Adrenal gland (tissue), 19 donors: ENCODE measurements at regions of chr17 and their contacts with region 1.

Region 1: DNA sequence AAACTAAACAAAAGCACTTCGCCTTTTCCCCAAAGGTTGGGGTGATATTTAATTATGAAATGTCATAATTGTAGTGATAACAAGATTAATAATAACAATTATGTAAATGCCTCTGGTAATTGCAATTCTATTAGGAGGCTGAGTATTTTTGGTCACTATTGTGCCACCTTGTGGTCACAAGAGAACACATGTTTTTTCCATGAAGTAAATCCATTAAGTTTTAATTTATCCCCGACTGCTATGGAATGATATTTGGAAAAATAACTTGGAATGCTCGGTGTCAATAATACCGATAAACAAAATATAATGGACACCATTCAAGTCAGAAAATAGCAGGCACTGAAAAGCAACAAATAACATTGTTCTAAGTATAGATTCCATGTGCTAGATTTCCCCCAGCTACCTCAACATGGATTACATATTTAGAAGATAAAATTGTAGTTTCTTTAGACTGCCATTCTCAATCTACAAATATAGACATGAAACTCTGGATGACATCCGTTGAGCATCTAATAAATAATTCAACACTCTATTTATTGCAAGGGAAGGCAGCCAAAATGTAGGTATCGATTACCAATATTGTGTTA is 25.0 kb upstream of the KCNJ2 start:
- DNase-seq: no peak
- H3K4me3 ChIP-seq: no peak overlapping the region
- H3K27ac ChIP-seq: no peak overlapping the region
- H3K4me1 ChIP-seq: no peaks in the 10 kb centered on the region
- H3K27me3 ChIP-seq: no peaks in the 10 kb centered on the region
- CTCF ChIP-seq: peak; percentile 64 to 83 (median 75)
- POLR2A ChIP-seq: no peak

Region 2: GRCh38 chr17:69567130-69567529 is 577.2 kb before region 1 on chr17:
- intact Hi-C with region 1: loop called in 1 of 2 experiments (anchors 10 kb)
- DNase-seq: no peak
- H3K4me3 ChIP-seq: no peak overlapping the region
- H3K27ac ChIP-seq: no peak overlapping the region
- H3K4me1 ChIP-seq: no peaks in the 10 kb centered on the region
- H3K27me3 ChIP-seq: no peaks in the 10 kb centered on the region
- CTCF ChIP-seq: no peak
- POLR2A ChIP-seq: no peak

Region 3: DNA sequence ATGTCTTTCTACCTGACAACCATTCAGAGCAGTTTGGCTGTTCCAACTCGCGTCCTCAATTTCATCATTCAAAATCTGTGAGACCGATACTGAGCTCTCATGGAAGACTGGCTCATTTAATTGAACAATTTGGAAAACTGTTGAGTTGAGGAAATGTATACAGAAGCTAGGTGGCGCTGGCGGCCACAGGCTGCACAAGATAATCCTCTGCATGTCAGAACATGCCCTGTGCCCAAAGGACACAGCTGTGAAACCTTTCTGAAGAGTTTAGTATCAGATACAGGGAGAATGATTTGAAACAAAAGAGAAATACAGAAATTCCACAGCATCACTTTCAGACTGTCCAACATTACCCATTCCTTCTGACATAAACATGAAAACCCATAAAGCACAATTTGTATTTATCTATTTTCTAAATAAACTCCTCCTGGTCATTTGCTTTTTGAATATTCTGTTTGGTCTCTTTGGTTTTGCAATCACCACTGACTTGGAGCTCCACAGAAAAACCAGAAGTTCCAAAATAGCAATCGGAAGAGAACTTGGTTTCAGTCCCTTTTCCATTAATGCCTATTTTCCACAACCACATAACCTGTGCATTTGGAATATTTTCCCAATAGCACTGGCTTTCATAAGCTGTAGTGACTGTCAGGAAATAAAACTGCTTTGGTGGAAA is 537.1 kb before region 1 on chr17:
- intact Hi-C with region 1: loop called (anchors 10 kb)
- DNase-seq: peak; percentile 72 to 93 (median 86)
- H3K4me3 ChIP-seq: peak overlapping the region in 1 of 4 donors; percentile 4
- H3K27ac ChIP-seq: peak overlapping the region in 4 of 5 donors; percentile 5 to 33 (median 28)
- H3K4me1 ChIP-seq: peaks cover 0 to 29% of the 10 kb centered on the region in 2 donors
- H3K27me3 ChIP-seq: no peaks in the 10 kb centered on the region
- CTCF ChIP-seq: peak; percentile 90 to 94 (median 91)
- POLR2A ChIP-seq: no peak

Region 4: GRCh38 chr17:69928611-69929010 is 215.7 kb before region 1 on chr17:
- intact Hi-C with region 1: no loop called
- DNase-seq: no peak
- H3K4me3 ChIP-seq: no peak overlapping the region
- H3K27ac ChIP-seq: no peak overlapping the region
- H3K4me1 ChIP-seq: no peaks in the 10 kb centered on the region
- H3K27me3 ChIP-seq: no peaks in the 10 kb centered on the region
- CTCF ChIP-seq: no peak
- POLR2A ChIP-seq: no peak

Region 5: GRCh38 chr17:70225276-70225675 is 80.9 kb after region 1 on chr17:
- intact Hi-C with region 1: no loop called
- DNase-seq: no peak
- H3K4me3 ChIP-seq: no peak overlapping the region
- H3K27ac ChIP-seq: no peak overlapping the region
- H3K4me1 ChIP-seq: no peaks in the 10 kb centered on the region
- H3K27me3 ChIP-seq: no peaks in the 10 kb centered on the region
- CTCF ChIP-seq: no peak
- POLR2A ChIP-seq: no peak